ENCODE measurements at regions of chrX and their contacts with region 1.

Region 1: DNA sequence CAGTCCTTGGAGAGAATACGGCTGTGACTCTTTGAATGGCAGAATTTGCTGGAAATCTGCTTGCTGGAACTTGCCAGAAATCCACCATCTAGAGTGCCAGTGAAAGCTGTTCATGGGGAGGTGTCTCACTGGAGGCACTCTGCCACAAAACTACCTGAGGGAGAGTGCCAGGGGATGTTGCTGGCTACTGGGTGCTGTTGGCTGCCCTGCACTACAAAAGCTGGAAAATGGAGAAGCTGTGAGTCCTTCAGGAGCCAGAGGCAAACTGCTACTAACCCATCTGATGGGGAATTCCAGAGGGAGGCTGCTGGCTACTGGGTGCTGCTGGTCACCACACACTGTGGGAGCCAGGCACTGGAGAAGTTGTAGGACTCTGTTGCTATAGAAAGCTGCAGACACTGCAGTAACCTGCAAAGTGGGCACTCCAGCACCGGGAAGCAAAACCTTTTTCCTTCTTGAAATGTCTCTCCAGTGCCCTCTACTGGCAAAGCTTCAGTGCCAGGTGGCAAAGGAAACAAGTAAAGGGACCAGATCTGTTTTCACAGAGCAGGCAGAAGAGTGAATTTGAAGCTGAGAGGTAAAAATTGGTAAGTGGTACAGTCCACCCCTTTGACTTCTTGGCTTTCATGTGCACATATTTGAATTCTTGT is 47.8 kb upstream of the HSD17B10 start:
- DNase-seq: peak; percentile 16 to 70
- ATAC-seq: peak; percentile 49 to 73 (median 52)
- H3K4me3 ChIP-seq: no peak overlapping the region
- H3K4me3 Mint-ChIP-seq: no peak overlapping the region
- H3K27ac ChIP-seq: no peak overlapping the region
- H3K27ac Mint-ChIP-seq: no peak overlapping the region
- H3K4me1 ChIP-seq: no peaks in the 10 kb centered on the region
- H3K4me1 Mint-ChIP-seq: no peaks in the 10 kb centered on the region
- H3K27me3 ChIP-seq: no peaks in the 10 kb centered on the region
- H3K27me3 Mint-ChIP-seq: peaks cover 0 to 28% of the 10 kb centered on the region in 2 donors
- CTCF ChIP-seq: peak; percentile 56

Region 2: DNA sequence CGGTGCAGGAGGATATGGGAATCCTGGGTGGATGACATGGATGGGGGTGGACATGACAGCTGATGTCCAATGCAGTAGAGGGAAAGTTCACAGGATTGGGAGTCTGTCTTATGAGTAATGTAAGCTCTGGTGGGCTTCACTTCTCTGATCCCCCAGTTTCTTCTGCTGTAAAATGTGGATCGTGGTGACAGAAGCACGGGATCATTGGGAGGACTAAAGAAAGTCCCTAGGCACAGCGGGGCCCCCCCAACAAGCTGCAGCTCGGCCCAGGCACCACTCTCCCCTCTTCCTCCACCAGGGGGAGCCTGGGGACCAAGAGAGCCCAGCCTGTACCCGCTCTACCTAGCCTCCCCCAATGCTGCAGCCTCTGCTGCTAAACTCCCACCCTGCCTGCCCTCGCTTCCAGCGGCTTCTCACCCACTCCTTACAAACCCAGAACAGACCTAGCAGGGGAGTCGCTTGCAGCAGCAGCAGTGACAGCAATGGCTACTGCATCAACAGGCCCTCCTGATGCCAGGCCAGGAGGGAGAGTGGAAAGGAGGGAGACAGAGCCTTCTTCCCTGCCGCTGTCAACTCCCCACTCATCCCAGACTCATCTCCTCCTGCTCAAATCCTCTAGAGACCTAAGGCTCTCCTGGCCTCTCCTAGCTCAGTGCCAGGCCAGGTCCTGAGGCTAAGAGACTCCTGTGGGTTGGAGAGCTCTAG is 164.4 kb before region 1 on chrX:
- intact Hi-C with region 1: loop called (anchors 2 kb)
- DNase-seq: peak; percentile 63 to 80
- ATAC-seq: peak; percentile 82 to 87 (median 84)
- H3K4me3 ChIP-seq: no peak overlapping the region
- H3K4me3 Mint-ChIP-seq: no peak overlapping the region
- H3K27ac ChIP-seq: no peak overlapping the region
- H3K27ac Mint-ChIP-seq: no peak overlapping the region
- H3K4me1 ChIP-seq: peaks cover 21% of the 10 kb centered on the region
- H3K4me1 Mint-ChIP-seq: peaks cover 14 to 24% of the 10 kb centered on the region in 2 donors
- H3K27me3 ChIP-seq: peaks cover 15% of the 10 kb centered on the region
- H3K27me3 Mint-ChIP-seq: peaks cover 23 to 37% of the 10 kb centered on the region in 2 donors
- CTCF ChIP-seq: peak; percentile 71